Uterus (tissue), 4 donors: ENCODE measurements at regions of chr6 and their contacts with region 1.

Region 1: DNA sequence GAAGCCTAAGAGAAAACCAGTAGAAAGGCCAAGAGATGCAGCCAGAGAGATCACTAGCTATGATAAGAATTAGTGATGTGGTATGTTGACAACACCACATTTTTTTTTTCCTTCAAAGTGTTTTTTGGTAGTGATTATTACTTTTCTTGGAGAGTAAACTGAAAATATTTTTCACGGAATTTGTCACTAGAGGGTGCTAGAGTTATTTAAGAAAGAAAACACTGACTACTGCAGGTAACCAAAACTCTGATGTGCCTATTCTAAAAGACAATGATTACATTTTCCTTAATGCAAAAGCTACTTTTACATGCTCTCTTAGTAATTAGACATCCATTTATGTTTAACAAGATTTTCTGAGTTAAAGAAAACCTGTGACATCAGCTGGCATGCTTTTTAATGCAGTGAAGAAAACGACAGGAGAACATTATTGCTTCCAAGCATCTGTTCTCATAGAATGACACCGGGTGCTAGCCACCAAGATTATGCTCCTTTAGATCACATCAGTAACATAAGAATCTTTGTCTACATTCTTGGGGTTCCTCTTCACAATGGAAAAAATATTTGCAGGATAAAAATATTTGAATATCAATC is 28.8 kb downstream of the RWDD2A start:
- DNase-seq: no peak
- H3K4me3 ChIP-seq: no peak overlapping the region
- H3K27ac ChIP-seq: no peak overlapping the region
- H3K4me1 ChIP-seq: no peaks in the 10 kb centered on the region
- H3K27me3 ChIP-seq: no peaks in the 10 kb centered on the region
- CTCF ChIP-seq: peak; percentile 11 to 44 (median 39)
- POLR2A ChIP-seq: no peak

Region 2: GRCh38 chr6:83119742-83120300 is 102.2 kb before region 1 on chr6:
- intact Hi-C with region 1: no loop called
- DNase-seq: no peak
- H3K4me3 ChIP-seq: no peak overlapping the region
- H3K27ac ChIP-seq: no peak overlapping the region
- H3K4me1 ChIP-seq: no peaks in the 10 kb centered on the region
- H3K27me3 ChIP-seq: no peaks in the 10 kb centered on the region
- CTCF ChIP-seq: no peak
- POLR2A ChIP-seq: no peak

Region 3: DNA sequence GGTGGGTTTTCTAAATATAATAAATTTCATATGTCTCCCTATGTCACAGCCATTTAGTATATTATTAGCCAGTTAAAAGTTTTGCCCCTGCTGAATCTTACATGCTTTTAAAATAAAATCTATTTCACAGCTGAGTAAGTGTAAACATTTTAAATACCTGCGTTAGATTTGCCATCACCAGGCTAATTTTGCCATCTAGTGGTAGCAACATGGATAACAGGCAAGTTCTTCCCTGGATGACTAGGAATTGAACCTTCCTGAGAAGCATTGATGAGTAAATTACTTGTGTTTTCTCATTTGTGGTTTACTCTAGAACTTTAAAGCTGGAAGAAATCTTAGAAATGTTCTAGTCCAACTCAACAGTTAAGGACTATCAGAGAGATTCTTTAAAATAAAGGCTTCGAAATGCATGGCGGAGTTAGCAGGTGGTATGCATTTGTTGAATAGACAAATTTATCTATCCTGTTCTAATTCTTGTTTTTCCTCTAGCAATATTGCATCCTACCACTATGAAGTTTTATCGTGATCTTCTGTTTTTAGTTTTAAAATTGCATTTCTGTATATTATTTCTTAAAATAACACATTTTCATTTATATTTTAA is 293.0 kb after region 1 on chr6:
- intact Hi-C with region 1: loop called (anchors 10 kb)
- DNase-seq: peak in 1 of 2 donors; percentile 24
- H3K4me3 ChIP-seq: no peak overlapping the region
- H3K27ac ChIP-seq: no peak overlapping the region
- H3K4me1 ChIP-seq: no peaks in the 10 kb centered on the region
- H3K27me3 ChIP-seq: no peaks in the 10 kb centered on the region
- CTCF ChIP-seq: peak; percentile 71 to 74 (median 72)
- POLR2A ChIP-seq: no peak